Cardiac septum (tissue), 1 donor: ENCODE measurements at regions of chr5 and their contacts with region 1.

Region 1: GRCh38 chr5:126972062-126972895 is 58.1 kb downstream of the MARCHF3 start:
- DNase-seq: no peak

Region 2: GRCh38 chr5:127011961-127012644 is 39.8 kb after region 1 on chr5:
- intact Hi-C with region 1: loop called (anchors 5 kb)
- DNase-seq: no peak

Region 3: GRCh38 chr5:127030259-127031146 is 58.2 kb after region 1 on chr5 and contains the start of gene MARCHF3:
- intact Hi-C with region 1: loop called (anchors 2 kb)
- DNase-seq: peak; percentile 99
- total RNA-seq, gene MARCHF3: 61.0 TPM